ENCODE measurements at regions of chr7 and their contacts with region 1.

Region 1: GRCh38 chr7:107138696-107139420 is 29.9 kb upstream of the HBP1 start:
- DNase-seq: no peak
- ATAC-seq: no peak

Region 2: GRCh38 chr7:107150375-107151073 is 11.7 kb after region 1 on chr7:
- intact Hi-C with region 1: loop called (anchors 1 kb)
- DNase-seq: peak; percentile 88
- ATAC-seq: peak; percentile 87

Measured in sciatic nerve (tissue), 2 donors.